Endothelial cell of umbilical vein (primary cell): ENCODE measurements at regions of chr14 and their contacts with region 1.

Region 1: GRCh38 chr14:99531251-99532096 is 50.3 kb downstream of the CCNK start:
- DNase-seq: peak; percentile 95
- H3K4me3 ChIP-seq: peak overlapping the region in 1 of 3 experiments; percentile 20
- H3K27ac ChIP-seq: peak overlapping the region; percentile 84
- H3K4me1 ChIP-seq: peaks cover 27% of the 10 kb centered on the region
- H3K27me3 ChIP-seq: no peaks in the 10 kb centered on the region
- CTCF ChIP-seq: no peak
- POLR2A ChIP-seq: peak; percentile 23

Region 2: DNA sequence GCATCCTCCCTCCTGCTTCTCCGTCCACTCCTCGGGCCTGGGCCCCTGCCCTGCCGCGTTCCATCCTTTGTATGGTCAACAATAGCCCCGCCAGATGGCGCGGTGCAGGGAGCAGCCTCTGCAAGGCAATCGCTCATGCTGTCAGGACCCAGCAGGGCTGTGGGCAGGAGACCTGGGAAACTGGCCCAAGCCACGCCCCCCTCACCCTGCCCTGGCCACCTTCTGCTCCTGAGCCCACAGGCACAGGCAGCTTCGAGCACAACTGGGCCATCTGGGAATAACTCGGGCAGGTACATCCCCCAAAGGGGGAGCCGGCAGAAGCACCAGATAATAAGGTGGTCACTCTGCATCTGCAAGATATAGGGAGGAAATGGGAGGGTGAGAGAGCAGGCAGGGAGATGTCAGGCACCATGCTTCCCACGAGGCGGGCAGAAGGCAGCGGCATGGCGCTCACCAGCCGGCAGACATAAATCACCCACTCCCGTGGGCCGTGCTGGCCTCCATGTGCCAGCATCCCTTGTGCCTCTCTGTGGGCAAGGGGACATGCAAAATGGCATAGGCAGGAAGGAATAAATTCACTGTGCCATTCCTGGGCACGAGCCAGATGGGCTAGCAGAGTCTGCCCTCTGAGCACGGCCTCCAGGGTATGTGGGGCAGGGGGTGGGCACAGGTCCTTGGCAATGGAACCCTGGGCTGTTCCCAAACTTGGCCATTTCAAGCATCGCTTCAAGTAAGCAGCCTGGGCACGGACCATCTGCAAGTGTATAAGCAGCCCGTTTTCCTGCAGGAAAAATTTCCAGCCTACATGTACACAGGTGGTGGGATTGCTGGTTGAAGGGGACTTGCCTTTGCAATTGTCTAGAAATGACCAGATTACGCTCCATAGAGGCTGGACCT is 32.0 kb after region 1 on chr14:
- CTCF ChIA-PET with region 1: interaction called, 4 read pairs
- POLR2A ChIA-PET with region 1: no interaction called
- dilution Hi-C with region 1: no loop called
- intact Hi-C with region 1: loop called (anchors 2 kb)
- DNase-seq: peak; percentile 77
- H3K4me3 ChIP-seq: no peak overlapping the region
- H3K27ac ChIP-seq: no peak overlapping the region
- H3K4me1 ChIP-seq: peaks cover 5% of the 10 kb centered on the region
- H3K27me3 ChIP-seq: no peaks in the 10 kb centered on the region
- CTCF ChIP-seq: peak; percentile 46 to 70
- POLR2A ChIP-seq: no peak

Region 3: DNA sequence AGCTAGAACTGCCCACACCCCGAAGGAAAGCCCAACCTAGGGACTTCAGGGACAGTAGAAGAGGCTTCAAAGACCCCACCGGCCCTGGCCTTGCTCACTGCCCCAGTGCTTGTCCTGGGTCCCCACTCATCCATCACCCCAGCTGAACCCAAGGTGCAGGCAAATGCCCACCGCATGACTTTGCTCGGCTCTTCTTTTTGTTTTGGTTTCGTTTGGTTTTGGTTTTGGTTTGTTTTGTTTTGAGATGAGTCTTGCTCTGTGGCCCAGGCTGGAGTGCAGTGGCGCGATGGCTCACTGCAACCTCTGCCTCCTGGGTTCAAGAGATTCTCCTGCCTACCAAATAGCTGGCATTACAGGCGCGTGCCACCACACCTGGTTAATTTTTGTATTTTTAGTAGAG is 63.6 kb after region 1 on chr14:
- CTCF ChIA-PET with region 1: no interaction called
- POLR2A ChIA-PET with region 1: no interaction called
- dilution Hi-C with region 1: no loop called
- intact Hi-C with region 1: no loop called
- DNase-seq: no peak
- H3K4me3 ChIP-seq: no peak overlapping the region
- H3K27ac ChIP-seq: no peak overlapping the region
- H3K4me1 ChIP-seq: peaks cover 32% of the 10 kb centered on the region
- H3K27me3 ChIP-seq: no peaks in the 10 kb centered on the region
- CTCF ChIP-seq: no peak
- POLR2A ChIP-seq: no peak

Region 4: GRCh38 chr14:99619835-99620834 is 88.7 kb after region 1 on chr14:
- CTCF ChIA-PET with region 1: interaction called, 3 read pairs
- POLR2A ChIA-PET with region 1: no interaction called
- dilution Hi-C with region 1: no loop called
- intact Hi-C with region 1: loop called (anchors 1 kb)
- DNase-seq: peak; percentile 89
- H3K4me3 ChIP-seq: peak overlapping the region in 1 of 3 experiments; percentile 2
- H3K27ac ChIP-seq: peak overlapping the region; percentile 95
- H3K4me1 ChIP-seq: peaks cover 40% of the 10 kb centered on the region
- H3K27me3 ChIP-seq: no peaks in the 10 kb centered on the region
- CTCF ChIP-seq: no peak
- POLR2A ChIP-seq: no peak

Region 5: DNA sequence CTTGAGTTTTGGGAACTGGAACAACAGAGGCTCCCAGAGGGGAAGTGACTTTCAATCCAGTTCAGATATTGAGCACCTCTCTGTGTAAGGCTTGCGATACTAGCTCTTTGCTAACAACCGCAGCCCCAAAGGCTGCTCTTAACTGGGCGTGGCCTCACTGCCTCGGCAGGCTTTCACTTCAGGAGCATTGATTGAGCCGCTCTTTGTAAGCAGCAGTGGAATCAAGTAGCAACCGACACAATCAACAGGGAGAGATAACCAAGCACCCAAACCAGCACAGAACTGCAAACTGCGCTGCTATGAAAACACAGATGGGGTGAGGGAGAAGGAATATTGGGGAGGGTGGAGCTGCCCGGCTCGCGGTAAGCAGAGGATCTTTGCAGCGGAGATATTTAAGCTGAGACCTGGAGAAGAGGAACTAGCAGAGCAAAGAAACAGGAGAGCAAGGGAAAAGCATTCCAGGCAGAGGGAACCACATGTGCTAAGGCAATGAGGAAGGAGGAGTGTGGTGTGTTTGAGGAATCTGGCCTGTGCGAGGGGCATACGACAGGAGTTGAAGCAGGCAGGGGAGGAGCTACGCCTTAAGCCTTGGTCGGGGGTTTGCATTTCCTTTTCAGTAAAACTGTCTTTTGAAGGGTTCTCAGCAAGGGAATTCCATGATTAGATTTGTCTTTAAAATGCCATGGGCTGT is 690.2 kb after region 1 on chr14:
- CTCF ChIA-PET with region 1: no interaction called
- POLR2A ChIA-PET with region 1: no interaction called
- dilution Hi-C with region 1: no loop called
- intact Hi-C with region 1: no loop called
- DNase-seq: peak; percentile 66
- H3K4me3 ChIP-seq: peak overlapping the region; percentile 27 to 77 (median 64)
- H3K27ac ChIP-seq: no peak overlapping the region
- H3K4me1 ChIP-seq: peaks cover 19% of the 10 kb centered on the region
- H3K27me3 ChIP-seq: no peaks in the 10 kb centered on the region
- CTCF ChIP-seq: no peak
- POLR2A ChIP-seq: no peak